Mammary epithelial cell (primary cell): ENCODE measurements at regions of chr15 and their contacts with region 1.

Region 1: DNA sequence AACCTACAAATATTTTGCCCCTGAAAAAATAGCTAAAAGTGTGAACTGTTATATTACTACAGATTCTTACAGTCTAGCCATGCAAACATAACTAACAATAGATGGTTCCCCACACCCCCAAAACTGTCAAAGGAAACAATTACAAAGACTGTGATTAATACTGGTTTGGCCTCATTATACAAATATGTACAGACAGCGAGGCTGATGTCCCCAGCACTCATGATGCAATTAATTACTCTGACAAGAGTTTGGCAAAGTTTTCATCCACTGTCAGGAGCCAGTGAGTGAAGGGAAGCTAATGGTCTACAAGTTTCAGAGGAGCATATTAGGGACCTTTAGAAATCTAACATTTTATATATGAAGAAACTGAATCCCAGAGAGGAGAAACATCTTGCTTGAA is 61.0 kb downstream of the HMG20A start:
- DNase-seq: peak; percentile 37
- H3K4me3 ChIP-seq: no peak overlapping the region
- H3K27ac ChIP-seq: no peak overlapping the region
- H3K4me1 ChIP-seq: peaks cover 22% of the 10 kb centered on the region
- H3K27me3 ChIP-seq: no peaks in the 10 kb centered on the region
- CTCF ChIP-seq: no peak

Region 2: DNA sequence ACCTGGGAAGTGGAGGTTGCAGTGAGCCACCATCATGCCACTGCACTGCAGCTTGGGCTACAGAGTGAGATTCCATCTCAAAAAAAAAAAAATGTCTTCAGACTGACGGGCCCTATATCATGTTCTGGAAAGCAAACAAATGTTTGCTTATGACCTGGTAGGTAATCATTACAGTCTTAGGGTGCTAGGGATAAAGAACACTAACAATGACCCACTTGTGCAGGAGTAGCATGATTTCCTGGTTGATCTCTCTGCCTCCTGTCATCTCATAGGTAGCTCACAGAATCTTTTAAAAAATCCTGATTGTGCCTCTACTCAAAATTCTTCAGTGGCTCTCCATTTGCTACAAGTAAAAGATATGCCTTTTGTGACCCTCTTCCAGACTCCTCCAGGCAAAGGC is 336.3 kb before region 1 on chr15:
- CTCF ChIA-PET with region 1: interaction called, 12 read pairs
- dilution Hi-C with region 1: no loop called
- in situ Hi-C with region 1: no loop called
- intact Hi-C with region 1: no loop called
- DNase-seq: no peak
- H3K4me3 ChIP-seq: no peak overlapping the region
- H3K27ac ChIP-seq: no peak overlapping the region
- H3K4me1 ChIP-seq: peaks cover 19% of the 10 kb centered on the region
- H3K27me3 ChIP-seq: no peaks in the 10 kb centered on the region
- CTCF ChIP-seq: no peak

Region 3: GRCh38 chr15:77568973-77569728 is 87.5 kb after region 1 on chr15:
- CTCF ChIA-PET with region 1: no interaction called
- dilution Hi-C with region 1: no loop called
- in situ Hi-C with region 1: no loop called
- intact Hi-C with region 1: no loop called
- DNase-seq: peak; percentile 8
- H3K4me3 ChIP-seq: peak overlapping the region in 1 of 3 experiments; percentile 21
- H3K27ac ChIP-seq: no peak overlapping the region
- H3K4me1 ChIP-seq: no peaks in the 10 kb centered on the region
- H3K27me3 ChIP-seq: no peaks in the 10 kb centered on the region
- CTCF ChIP-seq: no peak